ENCODE measurements at regions of chr19 and their contacts with region 1.

Region 1: GRCh38 chr19:3665681-3666544 is 34.4 kb downstream of the PIP5K1C start:
- DNase-seq: peak; percentile 86
- H3K4me3 ChIP-seq: no peak overlapping the region
- H3K27ac ChIP-seq: peak overlapping the region in 3 of 4 donors; percentile 99 to 100 (median 100)
- H3K4me1 ChIP-seq: peaks cover 0 to 56% (median 52%) of the 10 kb centered on the region in 4 donors
- H3K27me3 ChIP-seq: no peaks in the 10 kb centered on the region
- CTCF ChIP-seq: peak; percentile 97 to 99 (median 99)
- EP300 ChIP-seq: no peak
- POLR2A ChIP-seq: no peak

Region 2: GRCh38 chr19:3700221-3701032 is 34.5 kb after region 1 on chr19 and contains the start of gene PIP5K1C:
- intact Hi-C with region 1: loop called (anchors 1 kb)
- DNase-seq: peak; percentile 94
- H3K4me3 ChIP-seq: peak within 1 kb of the TSS; percentile 64 to 98 (median 95)
- H3K27ac ChIP-seq: peak within 1 kb of the TSS; percentile 85 to 99 (median 92)
- H3K4me1 ChIP-seq: peaks cover 0 to 29% (median 24%) of the 10 kb centered on the region in 4 donors
- H3K27me3 ChIP-seq: no peaks in the 10 kb centered on the region
- CTCF ChIP-seq: peak; percentile 72 to 82 (median 74)
- EP300 ChIP-seq: no peak
- POLR2A ChIP-seq: no peak
- total RNA-seq, gene PIP5K1C: 27.8 to 68.7 (median 44.2) TPM

Region 3: GRCh38 chr19:3733549-3734309 is 67.8 kb after region 1 on chr19:
- intact Hi-C with region 1: no loop called
- DNase-seq: no peak
- H3K4me3 ChIP-seq: no peak overlapping the region
- H3K27ac ChIP-seq: no peak overlapping the region
- H3K4me1 ChIP-seq: no peaks in the 10 kb centered on the region
- H3K27me3 ChIP-seq: no peaks in the 10 kb centered on the region
- CTCF ChIP-seq: no peak
- EP300 ChIP-seq: no peak
- POLR2A ChIP-seq: no peak

Region 4: GRCh38 chr19:3762501-3763459 is 96.9 kb after region 1 on chr19 and contains the start of gene MRPL54:
- intact Hi-C with region 1: loop called (anchors 5 kb)
- DNase-seq: peak; percentile 100
- H3K4me3 ChIP-seq: peak within 1 kb of the TSS; percentile 78 to 92 (median 88)
- H3K27ac ChIP-seq: peak within 1 kb of the TSS; percentile 95 to 98 (median 96)
- H3K4me1 ChIP-seq: peaks cover 0 to 46% (median 37%) of the 10 kb centered on the region in 4 donors
- H3K27me3 ChIP-seq: no peaks in the 10 kb centered on the region
- CTCF ChIP-seq: no peak
- EP300 ChIP-seq: peak in 1 of 4 donors; percentile 44
- POLR2A ChIP-seq: peak in 1 of 2 donors; percentile 73
- total RNA-seq, gene MRPL54: 80.6 to 123 (median 103) TPM

Measured in sigmoid colon (tissue), 7 donors.